Activated CD8-positive, alpha-beta memory T cell treated with anti-CD3 and anti-CD28 coated beads, Interleukin-2, amount 10 ng/mL, durations not matched to agents 7 days and 5 days (primary cell): ENCODE measurements at regions of chr17 and their contacts with region 1.

Region 1: DNA sequence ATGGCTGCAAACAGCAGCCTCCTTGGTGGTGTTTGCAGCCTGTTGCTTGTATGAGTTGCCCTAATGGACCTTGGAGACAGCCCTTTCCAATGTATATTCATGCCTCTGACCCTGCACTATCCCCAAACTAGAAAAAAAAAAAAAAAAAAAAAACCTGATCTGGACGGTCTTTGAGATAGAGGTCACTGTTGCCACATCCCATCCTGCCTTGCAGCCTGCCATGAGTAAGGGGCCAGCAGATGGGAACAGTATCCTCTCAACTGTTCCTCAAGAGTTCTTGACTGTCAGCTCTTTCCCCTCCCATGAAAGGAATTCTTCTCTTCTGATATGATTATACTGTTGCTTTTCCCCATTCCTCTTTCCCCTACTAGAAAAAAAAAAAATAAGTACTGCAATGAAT is 152.4 kb downstream of the SSH2 start:
- DNase-seq: no peak
- ATAC-seq: no peak
- H3K4me3 Mint-ChIP-seq: no peak overlapping the region
- H3K27ac Mint-ChIP-seq: no peak overlapping the region
- H3K4me1 Mint-ChIP-seq: peaks cover 9% of the 10 kb centered on the region
- H3K27me3 Mint-ChIP-seq: no peaks in the 10 kb centered on the region

Region 2: DNA sequence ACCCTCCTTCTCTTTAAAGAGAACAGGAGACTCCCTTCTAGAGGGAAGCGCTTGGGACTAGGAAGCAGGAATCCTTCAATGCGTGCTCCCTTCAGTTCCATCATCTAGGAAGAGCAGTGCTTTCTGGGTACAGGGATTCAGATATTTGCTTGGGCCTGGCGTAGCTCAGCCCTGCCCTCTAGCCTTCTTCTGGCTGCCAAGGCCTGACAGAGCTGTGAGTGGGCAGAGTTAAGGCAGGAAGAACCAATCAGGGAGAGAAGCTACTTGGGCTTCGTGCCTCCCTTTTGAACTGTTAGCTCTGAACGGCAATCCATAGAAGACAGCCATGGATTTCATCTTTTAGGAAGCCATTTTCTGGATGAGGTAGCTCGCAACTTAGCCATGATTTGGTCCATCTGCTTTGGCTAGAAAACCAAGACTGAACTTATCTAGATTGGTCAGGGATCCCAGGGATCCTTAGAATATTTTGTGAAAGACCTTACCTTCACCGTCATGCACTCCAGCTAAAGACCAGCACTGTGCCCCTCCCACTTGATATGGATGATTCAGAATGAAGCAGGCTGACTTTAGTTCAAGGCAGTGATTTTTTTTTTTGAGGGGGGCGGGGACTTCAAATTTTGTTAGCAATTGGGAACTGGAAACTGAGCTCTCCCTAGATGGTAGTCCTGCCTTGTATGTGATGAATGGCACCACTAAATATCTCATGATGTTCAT is 152.5 kb before region 1 on chr17:
- CTCF ChIA-PET with region 1: interaction called, 90 read pairs
- DNase-seq: no peak
- ATAC-seq: no peak
- H3K4me3 Mint-ChIP-seq: no peak overlapping the region
- H3K27ac Mint-ChIP-seq: no peak overlapping the region
- H3K4me1 Mint-ChIP-seq: peaks cover 55% of the 10 kb centered on the region
- H3K27me3 Mint-ChIP-seq: peaks cover 9% of the 10 kb centered on the region

Region 3: DNA sequence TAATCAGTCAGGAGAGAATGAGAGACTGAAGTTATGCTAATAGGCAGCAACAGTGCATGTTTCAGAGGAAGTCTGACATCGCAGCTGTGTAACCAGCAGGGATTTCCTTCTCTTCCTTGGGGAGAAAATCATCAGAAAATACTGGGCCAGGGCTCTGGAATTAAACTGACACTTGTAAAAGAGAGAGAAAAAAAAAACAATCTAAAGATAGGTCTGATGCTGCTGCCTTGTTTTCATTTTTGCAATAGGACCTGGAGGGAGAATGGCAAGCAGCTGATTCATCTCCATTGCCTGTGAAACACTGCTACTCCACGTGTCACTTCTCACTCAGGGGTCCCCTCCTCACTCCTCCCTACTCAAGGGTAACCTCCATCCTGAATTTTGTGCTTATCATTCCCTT is 137.2 kb before region 1 on chr17:
- CTCF ChIA-PET with region 1: interaction called, 124 read pairs
- DNase-seq: no peak
- ATAC-seq: no peak
- H3K4me3 Mint-ChIP-seq: no peak overlapping the region
- H3K27ac Mint-ChIP-seq: peak overlapping the region; percentile 42
- H3K4me1 Mint-ChIP-seq: peaks cover 21% of the 10 kb centered on the region
- H3K27me3 Mint-ChIP-seq: no peaks in the 10 kb centered on the region

Region 4: GRCh38 chr17:29760761-29761696 is 16.6 kb before region 1 on chr17:
- CTCF ChIA-PET with region 1: interaction called, 23 read pairs
- DNase-seq: peak; percentile 95
- ATAC-seq: peak; percentile 95
- H3K4me3 Mint-ChIP-seq: peak overlapping the region; percentile 98
- H3K27ac Mint-ChIP-seq: peak overlapping the region; percentile 97
- H3K4me1 Mint-ChIP-seq: peaks cover 34% of the 10 kb centered on the region
- H3K27me3 Mint-ChIP-seq: no peaks in the 10 kb centered on the region